ENCODE measurements at regions of chr2 and their contacts with region 1.

Region 1: DNA sequence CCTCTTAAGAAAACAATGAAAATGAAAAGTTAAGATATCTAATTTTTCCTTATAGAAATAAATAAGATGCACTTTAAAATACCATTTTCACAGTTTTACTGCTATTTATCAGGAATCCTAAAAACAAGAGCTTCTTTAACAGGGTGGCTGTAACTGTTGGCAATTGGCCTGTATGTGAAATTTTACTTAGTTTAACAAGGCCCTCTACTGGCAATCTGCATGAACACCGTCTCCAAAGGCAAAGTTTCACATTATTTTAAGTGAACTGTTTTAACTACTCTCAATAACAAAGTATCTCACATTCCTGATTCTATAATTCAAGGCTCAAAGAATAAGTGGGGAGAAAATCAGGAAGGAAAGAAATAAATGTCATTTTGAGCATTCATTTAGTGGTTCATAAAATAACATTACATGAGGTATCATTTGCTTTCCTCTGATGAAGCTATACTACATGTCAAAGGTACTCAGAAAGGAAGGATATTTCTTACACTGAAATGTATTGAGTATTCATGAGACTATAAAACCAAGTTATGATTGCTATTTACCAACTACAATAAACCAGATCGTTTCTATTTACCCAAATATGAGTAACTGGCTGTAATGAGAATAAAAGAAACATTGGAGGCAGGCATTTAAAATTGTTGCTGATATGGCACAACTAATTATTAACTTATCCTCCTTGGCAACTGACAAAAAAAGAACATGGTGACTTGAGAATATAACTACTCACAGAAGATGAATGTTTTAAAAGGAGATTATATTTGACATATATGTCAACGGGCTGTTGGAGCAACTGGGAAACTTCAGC is 7.0 kb downstream of the NCKAP5 start:
- DNase-seq: no peak
- ATAC-seq: peak; percentile 36 to 50

Region 2: DNA sequence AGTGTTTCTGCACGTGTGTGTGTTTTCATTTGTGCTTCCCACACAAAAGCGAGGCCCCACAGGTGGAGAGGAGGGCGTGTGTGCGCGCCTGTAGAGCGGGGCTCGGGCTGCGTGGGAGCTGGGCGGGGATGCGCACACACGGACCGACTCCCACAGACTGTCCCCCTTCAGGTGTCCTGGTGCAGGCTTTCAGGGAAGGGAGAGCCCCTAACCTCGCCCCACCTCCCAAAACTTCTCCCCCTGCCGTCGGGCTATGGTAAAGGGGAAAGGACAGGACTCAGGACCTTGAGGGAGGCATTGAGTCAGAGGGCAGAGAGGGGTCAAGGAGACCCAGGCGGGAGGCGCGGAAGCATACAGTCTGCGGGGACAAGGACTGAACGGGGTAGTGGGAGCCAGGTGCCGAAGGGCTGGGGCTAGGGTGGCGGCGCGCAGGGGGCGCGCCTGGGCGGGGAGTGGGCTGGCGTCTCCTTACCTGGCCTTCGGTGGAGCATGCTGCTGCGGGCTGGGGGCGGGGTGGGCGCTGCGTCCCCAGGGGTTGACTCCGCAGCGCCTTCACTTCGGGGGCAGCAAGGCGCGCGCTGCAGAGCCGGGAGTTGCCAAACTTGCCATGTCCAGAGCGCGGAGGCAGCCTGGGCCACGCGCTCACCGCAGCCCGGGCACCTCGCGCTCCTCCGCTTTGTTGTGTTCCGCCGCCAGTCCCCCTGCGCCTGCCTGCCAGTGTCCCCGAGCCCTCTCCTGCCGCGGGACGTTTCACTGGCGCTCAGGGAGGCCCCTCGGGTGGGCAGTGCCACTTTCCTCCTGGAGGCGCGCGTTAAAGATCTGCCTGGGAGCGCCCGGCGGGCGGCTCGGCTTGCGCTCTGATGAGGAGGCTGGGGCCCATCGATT is 295.0 kb before region 1 on chr2:
- intact Hi-C with region 1: loop called in 1 of 2 experiments (anchors 10 kb)
- DNase-seq: peak; percentile 21
- ATAC-seq: peak; percentile 52 to 54

Region 3: GRCh38 chr2:133434962-133435668 is 126.1 kb before region 1 on chr2:
- intact Hi-C with region 1: loop called in 1 of 2 experiments (anchors 10 kb)
- DNase-seq: peak; percentile 61
- ATAC-seq: peak; percentile 55 to 97

Measured in left cardiac atrium (tissue), 4 donors.